Activated CD4-positive, alpha-beta memory T cell treated with anti-CD3 and anti-CD28 coated beads for 36 hours (primary cell): ENCODE measurements at regions of chr4 and their contacts with region 1.

Region 1: DNA sequence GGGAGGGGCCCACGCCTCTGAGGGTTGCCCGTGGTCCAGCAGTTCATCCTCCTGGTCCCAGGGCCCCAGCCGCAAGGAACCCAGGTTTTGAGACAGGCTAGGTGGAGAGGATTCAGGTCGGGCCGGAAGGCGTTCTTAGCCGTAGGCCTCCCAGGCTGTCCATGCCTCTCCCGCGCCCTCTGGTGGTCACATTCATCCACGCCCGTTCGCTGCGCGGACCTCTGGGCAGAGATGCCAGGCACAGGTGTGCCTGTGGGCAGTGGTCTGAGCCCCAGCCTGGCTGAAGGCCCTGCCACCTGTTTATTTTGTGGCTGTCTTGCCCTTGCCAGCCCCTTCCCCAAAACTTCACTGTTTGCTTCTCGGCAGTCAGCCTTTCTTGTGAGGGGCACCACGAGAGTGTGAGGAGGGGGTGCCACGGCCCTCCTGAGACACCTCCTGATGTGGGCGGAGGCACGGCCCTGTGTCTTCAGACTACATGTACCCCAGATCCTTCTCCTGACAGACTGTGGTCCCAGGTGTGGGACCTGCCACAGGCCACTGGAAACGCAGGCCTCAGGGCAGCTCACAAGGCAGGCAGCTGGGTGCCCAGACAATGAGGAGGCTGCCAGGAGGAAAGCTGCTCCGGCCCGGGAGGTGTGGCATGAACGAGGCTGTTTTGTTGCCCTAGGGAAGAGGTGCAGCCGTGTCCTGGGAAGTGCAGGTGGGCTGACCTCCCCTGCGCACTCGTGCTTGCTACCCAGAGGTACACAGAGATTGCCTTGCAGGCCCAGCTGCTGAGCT is 5.0 kb downstream of the UVSSA start:
- DNase-seq: peak; percentile 94
- H3K4me3 Mint-ChIP-seq: no peak overlapping the region
- H3K27ac Mint-ChIP-seq: peak overlapping the region; percentile 20
- H3K4me1 Mint-ChIP-seq: peaks cover 31% of the 10 kb centered on the region
- H3K27me3 Mint-ChIP-seq: no peaks in the 10 kb centered on the region

Region 2: DNA sequence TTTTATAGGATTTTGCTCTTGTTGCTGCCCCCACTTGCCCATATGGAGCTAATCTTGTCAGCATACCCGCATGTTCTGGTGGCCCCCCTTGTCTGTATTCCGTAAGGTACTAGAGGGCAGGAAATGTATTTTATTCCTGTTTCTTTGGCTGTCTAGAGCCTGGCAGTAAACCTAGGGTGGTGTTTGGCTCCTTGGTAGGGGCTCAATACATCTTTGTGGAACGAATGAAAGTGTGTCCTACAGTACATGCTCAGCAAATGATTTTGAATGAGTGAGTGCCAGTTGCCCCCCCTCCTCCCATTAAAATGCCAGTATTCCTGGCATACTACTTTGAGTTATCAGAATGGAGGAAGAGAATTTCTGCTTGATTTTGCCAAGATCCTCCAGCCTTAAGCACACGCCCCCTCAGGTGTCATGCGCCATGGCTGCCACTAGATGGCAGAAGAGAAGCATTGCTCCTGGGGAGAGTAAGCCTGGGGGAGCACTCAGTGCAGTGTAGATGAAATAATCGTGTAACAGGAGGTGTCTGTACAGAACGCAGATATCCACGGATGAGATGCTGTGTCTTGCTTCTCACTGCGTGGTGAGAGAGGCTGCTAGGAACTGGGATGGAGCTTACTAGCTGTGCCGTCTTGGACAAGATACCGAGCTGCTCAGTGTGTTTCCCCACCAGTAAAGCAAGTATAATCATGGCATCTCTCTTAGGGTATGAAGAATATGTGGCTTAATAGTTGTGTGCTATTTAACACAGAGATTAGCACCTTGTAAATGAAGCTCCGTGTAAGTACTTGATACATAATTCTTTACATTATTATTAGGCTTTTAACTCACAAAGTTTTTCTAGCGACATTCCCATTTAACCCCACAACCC is 221.5 kb before region 1 on chr4:
- CTCF ChIA-PET with region 1: interaction called, 10 read pairs
- POLR2A ChIA-PET with region 1: no interaction called
- intact Hi-C with region 1: loop called (anchors 2 kb)
- DNase-seq: peak; percentile 81
- H3K4me3 Mint-ChIP-seq: no peak overlapping the region
- H3K27ac Mint-ChIP-seq: no peak overlapping the region
- H3K4me1 Mint-ChIP-seq: no peaks in the 10 kb centered on the region
- H3K27me3 Mint-ChIP-seq: peaks cover 2% of the 10 kb centered on the region

Region 3: DNA sequence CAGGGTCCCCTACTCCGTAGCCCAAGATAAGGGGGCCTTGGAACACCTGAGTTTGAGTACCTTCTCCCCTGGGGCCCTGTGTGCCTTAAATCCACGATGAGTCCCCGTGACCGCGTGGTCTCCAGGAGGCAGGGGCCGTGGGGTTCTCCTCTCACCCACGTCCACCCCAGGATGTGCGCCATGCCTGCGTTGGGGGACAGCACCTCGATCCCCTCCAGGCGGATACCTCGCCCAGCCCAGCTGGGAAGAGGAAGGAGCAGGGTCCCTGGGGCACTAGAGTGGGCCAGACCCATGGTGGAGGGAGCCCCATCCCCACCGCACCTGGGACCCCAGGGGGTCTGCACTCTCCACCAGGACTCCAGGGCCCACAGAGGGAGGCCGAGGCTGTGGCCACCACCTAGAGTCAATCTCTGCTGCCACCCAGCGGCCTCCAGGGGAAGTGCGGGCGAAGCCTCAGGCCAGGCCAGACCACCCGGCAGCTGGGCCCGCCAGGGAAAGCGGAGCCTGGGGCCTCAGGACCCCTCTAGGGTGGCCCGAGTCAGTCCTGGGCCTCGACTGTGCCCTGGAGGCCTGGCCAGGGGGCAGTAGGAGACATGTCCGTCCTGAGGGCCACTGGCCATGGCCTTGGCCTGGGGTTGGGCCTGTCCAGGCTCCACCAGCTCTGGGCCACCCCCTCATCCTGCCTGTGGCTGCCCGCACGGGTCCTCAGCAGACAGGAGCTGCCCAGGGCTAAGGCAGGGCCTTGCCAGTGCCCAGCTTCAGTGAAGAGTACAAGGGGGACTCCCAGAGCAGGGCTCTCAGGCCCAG is 277.1 kb after region 1 on chr4:
- CTCF ChIA-PET with region 1: interaction called, 8 read pairs
- POLR2A ChIA-PET with region 1: no interaction called
- intact Hi-C with region 1: loop called (anchors 1 kb)
- DNase-seq: peak; percentile 74
- H3K4me3 Mint-ChIP-seq: no peak overlapping the region
- H3K27ac Mint-ChIP-seq: no peak overlapping the region
- H3K4me1 Mint-ChIP-seq: no peaks in the 10 kb centered on the region
- H3K27me3 Mint-ChIP-seq: no peaks in the 10 kb centered on the region